GM10248 (cell line): ENCODE measurements at regions of chr17 and their contacts with region 1.

Region 1: GRCh38 chr17:18183334-18184142 is at the start of gene ALKBH5:
- DNase-seq: peak; percentile 99
- CTCF ChIP-seq: no peak

Region 2: DNA sequence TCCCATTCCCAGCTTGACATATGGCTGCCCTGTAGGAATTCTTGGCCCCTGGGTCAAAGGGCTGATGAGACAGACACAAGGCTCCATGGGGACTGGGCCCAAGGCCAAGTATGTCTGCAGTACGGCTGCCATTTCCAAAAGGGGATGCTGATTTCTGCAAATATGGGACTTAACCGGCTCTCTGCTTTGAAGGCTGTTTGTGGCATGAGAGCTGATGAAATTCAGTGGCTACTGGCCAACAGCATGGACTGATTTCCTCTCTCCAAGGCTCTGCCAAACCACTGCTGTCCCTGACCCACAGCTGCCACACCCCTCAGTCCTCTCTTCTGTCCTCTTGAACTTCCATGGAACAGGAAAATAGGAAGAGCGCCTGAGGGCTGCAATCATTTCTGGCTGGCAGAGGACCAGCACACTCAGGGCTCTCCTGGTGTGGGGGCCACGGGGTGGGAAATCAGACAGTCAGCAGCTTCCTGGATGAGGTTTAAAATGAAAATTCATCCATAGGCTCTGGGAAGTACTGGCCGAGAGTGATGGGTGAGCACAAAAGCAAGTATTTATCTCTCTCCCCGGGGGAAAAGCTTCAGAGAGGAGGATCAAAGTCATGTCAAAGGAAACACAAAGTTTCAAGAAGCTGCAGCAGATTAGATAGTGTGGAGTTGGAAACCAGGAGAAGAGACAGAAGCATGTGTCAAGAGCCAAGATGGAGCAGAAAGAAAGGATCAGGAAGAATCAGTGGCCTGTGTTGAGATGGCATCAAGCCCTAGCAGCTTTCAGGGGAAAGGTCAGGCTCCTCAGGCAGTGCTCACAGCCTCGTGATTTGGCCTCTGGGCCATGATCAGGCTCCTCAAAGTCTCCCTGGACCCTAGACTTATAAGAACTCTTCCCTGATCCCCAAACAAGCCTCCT is 282.7 kb before region 1 on chr17:
- CTCF ChIA-PET with region 1: no interaction called
- POLR2A ChIA-PET with region 1: no interaction called
- DNase-seq: no peak
- CTCF ChIP-seq: no peak

Region 3: GRCh38 chr17:18070861-18071340 is 112.6 kb before region 1 on chr17:
- CTCF ChIA-PET with region 1: no interaction called
- POLR2A ChIA-PET with region 1: no interaction called
- DNase-seq: no peak
- CTCF ChIP-seq: no peak

Region 4: GRCh38 chr17:18161207-18162145 is 22.1 kb before region 1 on chr17:
- CTCF ChIA-PET with region 1: interaction called, 26 read pairs
- POLR2A ChIA-PET with region 1: interaction called, 4 read pairs
- DNase-seq: peak; percentile 89
- CTCF ChIP-seq: no peak

Region 5: GRCh38 chr17:18235743-18236256 is 52.3 kb after region 1 on chr17:
- CTCF ChIA-PET with region 1: no interaction called
- POLR2A ChIA-PET with region 1: no interaction called
- DNase-seq: no peak
- CTCF ChIP-seq: no peak

Region 6: DNA sequence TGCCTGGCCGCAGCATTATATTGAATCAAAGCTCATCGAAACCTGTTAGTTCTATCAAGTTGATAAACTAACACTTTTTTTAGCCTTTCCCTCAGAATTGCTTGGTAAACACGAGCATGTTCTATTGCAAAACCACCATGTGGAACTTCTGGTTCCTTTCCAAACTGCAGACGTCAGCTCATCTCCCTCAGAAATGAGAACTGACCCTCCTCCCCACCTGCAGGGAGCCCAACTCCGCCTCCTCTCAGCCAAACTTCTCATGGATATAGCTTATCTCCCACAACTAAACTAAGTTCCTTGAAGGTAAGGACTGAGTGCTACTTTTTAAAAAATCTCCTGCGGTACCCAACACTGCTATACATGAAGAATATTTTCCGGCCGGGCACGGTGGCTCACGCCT is 173.1 kb after region 1 on chr17:
- CTCF ChIA-PET with region 1: no interaction called
- POLR2A ChIA-PET with region 1: no interaction called
- DNase-seq: no peak
- CTCF ChIP-seq: no peak